ENCODE measurements at regions of chr2 and their contacts with region 1.

Region 1: GRCh38 chr2:191009541-191010374 is 4.2 kb downstream of the STAT1 start:
- DNase-seq: no peak
- ATAC-seq: no peak

Region 2: DNA sequence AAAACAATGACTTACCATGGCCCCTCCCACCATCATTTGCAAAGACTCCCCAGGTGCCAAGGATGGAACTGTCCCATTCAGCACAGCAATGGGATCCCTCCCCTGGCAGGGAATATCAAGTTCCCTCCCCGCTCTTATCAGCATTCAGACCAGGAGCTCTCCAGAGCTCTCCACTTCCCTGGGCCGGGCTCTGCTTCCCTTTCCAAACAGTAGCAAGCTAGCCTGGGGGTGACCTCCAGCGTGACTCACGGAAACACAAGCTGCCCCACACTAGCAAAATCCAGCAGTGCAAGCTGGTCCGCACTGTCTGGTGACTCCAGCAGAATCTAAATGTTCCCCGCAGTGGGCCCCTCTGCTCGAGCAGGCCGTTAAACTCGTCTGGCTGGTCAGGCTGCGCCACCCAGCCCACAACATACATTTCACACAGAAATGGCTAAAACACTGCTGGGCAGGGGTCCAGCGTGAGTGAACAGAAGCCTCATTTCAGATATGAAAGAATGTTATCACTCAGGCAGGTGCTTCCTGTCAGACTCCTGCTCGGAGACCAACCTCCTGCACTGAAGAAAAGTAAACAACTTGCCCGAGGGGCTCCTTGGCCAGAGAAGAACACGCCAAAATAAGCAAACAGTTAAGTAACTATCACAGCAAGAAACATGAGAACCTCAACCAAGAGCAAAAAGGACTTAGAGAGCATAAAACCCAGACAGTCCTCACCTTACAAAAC is 29.7 kb before region 1 on chr2:
- intact Hi-C with region 1: loop called in 1 of 2 experiments (anchors 2 kb)
- DNase-seq: peak; percentile 88
- ATAC-seq: peak; percentile 85 to 91

Region 3: GRCh38 chr2:191086706-191087105 is 76.9 kb after region 1 on chr2:
- intact Hi-C with region 1: no loop called
- DNase-seq: no peak
- ATAC-seq: no peak

Measured in left cardiac atrium (tissue), 4 donors.